Left lung (tissue), 14 donors: ENCODE measurements at regions of chr11 and their contacts with region 1.

Region 1: GRCh38 chr11:106568632-106569031 is 449.6 kb downstream of the GUCY1A2 start:
- DNase-seq: no peak
- ATAC-seq: no peak
- H3K4me3 ChIP-seq: no peak overlapping the region
- H3K27ac ChIP-seq: no peak overlapping the region
- H3K4me1 ChIP-seq: no peaks in the 10 kb centered on the region
- H3K27me3 ChIP-seq: no peaks in the 10 kb centered on the region
- CTCF ChIP-seq: no peak

Region 2: GRCh38 chr11:106306942-106307341 is 261.7 kb before region 1 on chr11:
- intact Hi-C with region 1: no loop called
- DNase-seq: no peak
- ATAC-seq: no peak
- H3K4me3 ChIP-seq: no peak overlapping the region
- H3K27ac ChIP-seq: no peak overlapping the region
- H3K4me1 ChIP-seq: no peaks in the 10 kb centered on the region
- H3K27me3 ChIP-seq: no peaks in the 10 kb centered on the region
- CTCF ChIP-seq: peak in 1 of 2 donors; percentile 11

Region 3: DNA sequence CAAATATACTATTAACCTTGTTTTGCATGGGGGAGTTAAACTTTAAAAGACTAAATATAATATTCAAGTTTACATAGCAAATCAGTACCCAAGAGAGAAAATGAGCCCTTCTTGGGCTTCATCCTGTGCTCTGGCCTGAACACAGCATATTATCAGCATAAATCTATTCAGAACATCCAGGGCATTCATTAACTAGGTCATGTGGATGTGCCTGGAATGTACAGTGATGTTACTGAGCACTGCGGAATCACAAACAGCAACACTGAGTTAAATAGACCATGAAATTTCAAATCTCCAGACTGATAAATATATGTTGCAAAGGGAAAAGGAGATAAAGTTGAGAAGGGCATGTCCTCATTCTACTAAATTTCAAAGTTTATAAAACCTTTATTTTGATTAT is 64.7 kb before region 1 on chr11:
- intact Hi-C with region 1: loop called in 1 of 2 experiments (anchors 10 kb)
- DNase-seq: no peak
- ATAC-seq: no peak
- H3K4me3 ChIP-seq: no peak overlapping the region
- H3K27ac ChIP-seq: no peak overlapping the region
- H3K4me1 ChIP-seq: no peaks in the 10 kb centered on the region
- H3K27me3 ChIP-seq: no peaks in the 10 kb centered on the region
- CTCF ChIP-seq: no peak

Region 4: GRCh38 chr11:106785913-106786650 is 217.4 kb after region 1 on chr11:
- intact Hi-C with region 1: no loop called
- DNase-seq: peak in 1 of 4 donors; percentile 43
- ATAC-seq: no peak
- H3K4me3 ChIP-seq: no peak overlapping the region
- H3K27ac ChIP-seq: no peak overlapping the region
- H3K4me1 ChIP-seq: peaks cover 0 to 3% of the 10 kb centered on the region in 2 donors
- H3K27me3 ChIP-seq: no peaks in the 10 kb centered on the region
- CTCF ChIP-seq: no peak